ENCODE measurements at regions of chr13 and their contacts with region 1.

Region 1: DNA sequence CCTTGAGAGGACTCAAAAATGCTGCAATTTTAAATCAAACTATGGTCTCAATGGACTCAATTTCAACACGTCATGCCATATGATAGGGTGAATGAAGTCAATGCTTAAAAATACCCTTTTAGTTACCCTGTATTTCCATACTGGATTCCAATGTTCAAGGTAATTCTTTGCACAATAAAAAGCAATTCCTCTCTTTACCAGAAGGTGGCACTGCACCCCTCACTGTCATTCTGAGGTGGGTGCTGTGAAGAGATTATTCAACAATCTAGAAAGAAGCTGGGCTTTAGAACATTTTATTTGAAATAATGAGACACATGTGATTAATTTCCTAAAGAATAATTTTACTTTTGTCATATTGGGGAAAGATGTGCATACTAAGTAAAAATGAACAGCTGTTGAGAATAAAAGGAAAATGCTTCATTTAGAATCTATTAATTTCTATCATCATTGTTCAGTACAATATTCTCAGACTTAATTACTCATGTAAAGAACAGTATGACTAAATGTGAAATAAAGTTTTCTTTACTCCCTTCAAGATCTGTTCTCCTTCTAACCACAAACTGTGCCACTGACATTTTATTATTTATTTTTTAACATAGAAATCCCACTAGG is 789.1 kb downstream of the GPC5 start:
- DNase-seq: peak; percentile 66
- H3K4me3 Mint-ChIP-seq: no peak overlapping the region
- H3K27ac Mint-ChIP-seq: no peak overlapping the region
- H3K4me1 Mint-ChIP-seq: no peaks in the 10 kb centered on the region
- H3K27me3 Mint-ChIP-seq: no peaks in the 10 kb centered on the region
- CTCF ChIP-seq: peak; percentile 79

Region 2: DNA sequence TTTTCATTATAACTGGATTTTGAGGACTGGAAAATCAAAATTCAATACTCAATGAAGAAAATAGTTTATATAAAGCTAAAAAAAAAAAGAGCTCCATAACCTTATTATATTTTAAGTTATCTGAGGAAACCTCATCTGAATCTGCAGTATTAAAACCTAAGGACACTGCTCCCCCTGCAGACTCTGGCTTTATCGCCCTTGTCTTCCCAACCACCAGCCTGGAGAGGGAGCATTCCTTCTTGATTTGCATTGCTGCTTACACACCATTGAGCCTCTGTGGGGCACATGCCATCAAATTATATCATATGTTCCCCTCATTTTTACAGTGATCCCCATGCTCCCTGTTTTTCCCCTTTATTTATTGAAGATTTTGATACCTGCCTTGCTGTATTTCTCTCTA is 167.7 kb after region 1 on chr13:
- CTCF ChIA-PET with region 1: interaction called, 6 read pairs
- POLR2A ChIA-PET with region 1: no interaction called
- intact Hi-C with region 1: loop called (anchors 1 kb)
- DNase-seq: peak; percentile 47
- H3K4me3 Mint-ChIP-seq: no peak overlapping the region
- H3K27ac Mint-ChIP-seq: no peak overlapping the region
- H3K4me1 Mint-ChIP-seq: no peaks in the 10 kb centered on the region
- H3K27me3 Mint-ChIP-seq: no peaks in the 10 kb centered on the region
- CTCF ChIP-seq: peak; percentile 30

Region 3: GRCh38 chr13:92530364-92530763 is 342.9 kb after region 1 on chr13:
- CTCF ChIA-PET with region 1: interaction called, 3 read pairs
- POLR2A ChIA-PET with region 1: no interaction called
- intact Hi-C with region 1: loop called (anchors 2 kb)
- DNase-seq: no peak
- H3K4me3 Mint-ChIP-seq: no peak overlapping the region
- H3K27ac Mint-ChIP-seq: no peak overlapping the region
- H3K4me1 Mint-ChIP-seq: no peaks in the 10 kb centered on the region
- H3K27me3 Mint-ChIP-seq: no peaks in the 10 kb centered on the region
- CTCF ChIP-seq: peak; percentile 21

Region 4: DNA sequence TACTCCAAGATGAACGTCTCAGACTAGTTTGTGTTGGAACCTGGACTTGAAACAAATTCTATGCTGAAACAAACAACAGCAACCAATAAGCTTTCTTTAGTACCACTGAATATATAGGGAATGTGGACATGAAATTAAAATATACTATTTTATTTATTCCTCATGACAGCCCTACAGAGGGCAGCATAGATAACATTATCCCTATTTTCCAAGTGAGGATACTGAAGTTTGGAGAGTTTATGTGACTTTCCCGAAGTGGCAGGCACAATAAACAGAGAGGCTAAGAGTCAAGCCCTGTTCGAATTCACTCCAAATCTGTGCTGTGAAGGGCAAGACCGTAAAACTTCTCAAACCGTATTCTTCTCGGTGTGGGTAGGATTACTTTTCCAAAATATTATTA is 529.3 kb after region 1 on chr13:
- CTCF ChIA-PET with region 1: no interaction called
- POLR2A ChIA-PET with region 1: no interaction called
- intact Hi-C with region 1: loop called (anchors 5 kb)
- DNase-seq: peak; percentile 40
- H3K4me3 Mint-ChIP-seq: no peak overlapping the region
- H3K27ac Mint-ChIP-seq: no peak overlapping the region
- H3K4me1 Mint-ChIP-seq: no peaks in the 10 kb centered on the region
- H3K27me3 Mint-ChIP-seq: no peaks in the 10 kb centered on the region
- CTCF ChIP-seq: peak; percentile 38

Region 5: DNA sequence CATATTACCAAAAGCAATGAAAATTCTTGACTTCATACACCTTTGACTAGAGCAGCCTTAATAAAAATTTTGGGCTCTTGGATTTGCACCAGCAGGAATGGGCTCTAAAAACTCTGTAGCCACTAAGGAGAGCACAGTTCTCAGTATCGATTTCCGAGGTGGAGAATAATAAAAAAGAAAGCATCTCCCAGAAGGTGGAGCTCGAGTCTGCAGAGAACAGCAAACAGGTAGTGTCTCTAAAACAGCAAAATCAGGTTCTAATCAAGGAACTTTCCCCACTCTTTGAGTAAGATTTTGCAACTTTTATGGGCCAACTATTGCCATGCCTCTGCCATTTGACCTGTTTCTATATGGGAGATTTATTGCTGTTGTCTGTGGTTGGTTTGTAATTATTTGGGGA is 780.4 kb after region 1 on chr13:
- CTCF ChIA-PET with region 1: interaction called, 3 read pairs
- POLR2A ChIA-PET with region 1: no interaction called
- intact Hi-C with region 1: loop called (anchors 10 kb)
- DNase-seq: peak; percentile 53
- H3K4me3 Mint-ChIP-seq: no peak overlapping the region
- H3K27ac Mint-ChIP-seq: no peak overlapping the region
- H3K4me1 Mint-ChIP-seq: no peaks in the 10 kb centered on the region
- H3K27me3 Mint-ChIP-seq: no peaks in the 10 kb centered on the region
- CTCF ChIP-seq: peak; percentile 39